Pancreas (tissue), 10 donors: ENCODE measurements at regions of chr6 and their contacts with region 1.

Region 1: GRCh38 chr6:42532038-42532669 is 31.7 kb upstream of the UBR2 start:
- DNase-seq: peak in 1 of 6 donors; percentile 26
- ATAC-seq: peak; percentile 68 to 87 (median 77)
- H3K4me3 ChIP-seq: no peak overlapping the region
- H3K27ac ChIP-seq: no peak overlapping the region
- H3K4me1 ChIP-seq: no peaks in the 10 kb centered on the region
- H3K27me3 ChIP-seq: no peaks in the 10 kb centered on the region
- CTCF ChIP-seq: peak; percentile 73 to 91 (median 88)

Region 2: GRCh38 chr6:42148058-42148457 is 384.1 kb before region 1 on chr6:
- intact Hi-C with region 1: no loop called
- DNase-seq: no peak
- ATAC-seq: peak in 1 of 4 donors; percentile 32
- H3K4me3 ChIP-seq: no peak overlapping the region
- H3K27ac ChIP-seq: no peak overlapping the region
- H3K4me1 ChIP-seq: no peaks in the 10 kb centered on the region
- H3K27me3 ChIP-seq: no peaks in the 10 kb centered on the region
- CTCF ChIP-seq: no peak

Region 3: GRCh38 chr6:42260972-42261371 is 271.2 kb before region 1 on chr6:
- intact Hi-C with region 1: loop called in 1 of 3 experiments (anchors 10 kb)
- DNase-seq: peak in 2 of 6 donors; percentile 42 to 66
- ATAC-seq: peak; percentile 40 to 83 (median 78)
- H3K4me3 ChIP-seq: no peak overlapping the region
- H3K27ac ChIP-seq: no peak overlapping the region
- H3K4me1 ChIP-seq: no peaks in the 10 kb centered on the region
- H3K27me3 ChIP-seq: no peaks in the 10 kb centered on the region
- CTCF ChIP-seq: peak in 2 of 4 donors; percentile 37 to 41